ENCODE measurements at regions of chr12 and their contacts with region 1.

Region 1: GRCh38 chr12:48995061-48995879 is 3.9 kb downstream of the DDN start:
- DNase-seq: peak; percentile 80
- H3K4me3 Mint-ChIP-seq: peak overlapping the region; percentile 71
- H3K27ac Mint-ChIP-seq: no peak overlapping the region
- H3K4me1 Mint-ChIP-seq: peaks cover 10% of the 10 kb centered on the region
- H3K27me3 Mint-ChIP-seq: peaks cover 3% of the 10 kb centered on the region
- CTCF ChIP-seq: peak; percentile 85

Region 2: GRCh38 chr12:48758221-48758620 is 237.0 kb before region 1 on chr12:
- CTCF ChIA-PET with region 1: no interaction called
- POLR2A ChIA-PET with region 1: no interaction called
- intact Hi-C with region 1: no loop called
- DNase-seq: no peak
- H3K4me3 Mint-ChIP-seq: no peak overlapping the region
- H3K27ac Mint-ChIP-seq: no peak overlapping the region
- H3K4me1 Mint-ChIP-seq: no peaks in the 10 kb centered on the region
- H3K27me3 Mint-ChIP-seq: no peaks in the 10 kb centered on the region
- CTCF ChIP-seq: no peak

Region 3: GRCh38 chr12:48936379-48936979 is 58.8 kb before region 1 on chr12:
- CTCF ChIA-PET with region 1: interaction called, 16 read pairs
- POLR2A ChIA-PET with region 1: interaction called, 3 read pairs
- intact Hi-C with region 1: loop called (anchors 1 kb)
- DNase-seq: peak; percentile 62
- H3K4me3 Mint-ChIP-seq: no peak overlapping the region
- H3K27ac Mint-ChIP-seq: no peak overlapping the region
- H3K4me1 Mint-ChIP-seq: no peaks in the 10 kb centered on the region
- H3K27me3 Mint-ChIP-seq: no peaks in the 10 kb centered on the region
- CTCF ChIP-seq: peak; percentile 77

Region 4: GRCh38 chr12:48969833-48970701 is 25.2 kb before region 1 on chr12:
- CTCF ChIA-PET with region 1: interaction called, 4 read pairs
- POLR2A ChIA-PET with region 1: interaction called, 4 read pairs
- intact Hi-C with region 1: loop called (anchors 2 kb)
- DNase-seq: no peak
- H3K4me3 Mint-ChIP-seq: peak overlapping the region; percentile 73
- H3K27ac Mint-ChIP-seq: no peak overlapping the region
- H3K4me1 Mint-ChIP-seq: peaks cover 14% of the 10 kb centered on the region
- H3K27me3 Mint-ChIP-seq: no peaks in the 10 kb centered on the region
- CTCF ChIP-seq: no peak

Measured in MCF 10A (cell line).